Activated naive CD4-positive, alpha-beta T cell treated with anti-CD3 and anti-CD28 coated beads for 36 hours (primary cell): ENCODE measurements at regions of chr9 and their contacts with region 1.

Region 1: GRCh38 chr9:136132500-136133050 is 13.9 kb upstream of the TMEM250 start:
- DNase-seq: no peak
- H3K4me3 Mint-ChIP-seq: no peak overlapping the region
- H3K27ac Mint-ChIP-seq: no peak overlapping the region
- H3K4me1 Mint-ChIP-seq: peaks cover 4% of the 10 kb centered on the region
- H3K27me3 Mint-ChIP-seq: peaks cover 34% of the 10 kb centered on the region

Region 2: DNA sequence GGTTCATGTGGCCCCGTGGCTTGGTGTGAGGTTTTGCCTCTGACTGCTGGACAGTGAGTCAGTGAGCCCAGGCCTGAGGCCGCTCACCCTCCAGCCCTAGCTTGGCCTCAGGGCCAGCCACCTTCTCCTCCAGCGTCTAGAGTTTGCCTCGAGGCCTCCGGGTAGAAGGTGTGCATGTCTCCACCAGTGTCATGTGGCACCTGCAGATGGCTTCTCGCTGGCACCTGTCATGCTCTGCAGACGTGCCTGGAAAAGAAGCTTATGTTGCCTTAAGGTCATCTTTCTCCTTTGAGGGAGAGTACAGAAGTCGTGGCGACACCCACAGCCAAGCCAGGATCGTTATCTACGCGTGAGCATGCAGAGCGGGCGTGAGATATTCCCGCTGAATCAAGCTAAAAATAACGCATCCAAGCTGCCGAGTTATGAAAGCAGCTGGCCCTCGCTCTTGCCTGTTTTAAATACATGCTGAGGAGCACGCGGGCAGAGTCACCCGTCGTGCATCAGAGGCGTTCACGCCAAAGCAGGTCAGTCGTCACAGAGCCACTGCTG is 1331.7 kb before region 1 on chr9:
- CTCF ChIA-PET with region 1: no interaction called
- intact Hi-C with region 1: no loop called
- DNase-seq: no peak
- H3K4me3 Mint-ChIP-seq: no peak overlapping the region
- H3K27ac Mint-ChIP-seq: no peak overlapping the region
- H3K4me1 Mint-ChIP-seq: no peaks in the 10 kb centered on the region
- H3K27me3 Mint-ChIP-seq: peaks cover 2% of the 10 kb centered on the region

Region 3: GRCh38 chr9:136283291-136284235 is 151.0 kb after region 1 on chr9:
- CTCF ChIA-PET with region 1: no interaction called
- intact Hi-C with region 1: loop called (anchors 1 kb)
- DNase-seq: peak; percentile 82
- H3K4me3 Mint-ChIP-seq: no peak overlapping the region
- H3K27ac Mint-ChIP-seq: no peak overlapping the region
- H3K4me1 Mint-ChIP-seq: peaks cover 6% of the 10 kb centered on the region
- H3K27me3 Mint-ChIP-seq: peaks cover 3% of the 10 kb centered on the region